GM12878 (cell line): ENCODE measurements at regions of chr5 and their contacts with region 1.

Region 1: GRCh38 chr5:77852514-77853352 is 76.6 kb upstream of the TBCA start:
- DNase-seq: peak; percentile 80
- ATAC-seq: peak; percentile 94
- H3K4me3 ChIP-seq: peak overlapping the region; percentile 76
- H3K27ac ChIP-seq: peak overlapping the region; percentile 78
- H3K4me1 ChIP-seq: peaks cover 3% of the 10 kb centered on the region; the same call in 1 of the 2 replicates
- H3K27me3 ChIP-seq: no peaks in the 10 kb centered on the region
- CTCF ChIP-seq: no peak
- EP300 ChIP-seq: 0 out of 4 replicates have a peak, but pooled peaks have one; percentile 18 to 30
- POLR2A ChIP-seq: peak; percentile 59
- RAD21 ChIP-seq: no peak; the same call in 1 of the 2 replicates

Region 2: DNA sequence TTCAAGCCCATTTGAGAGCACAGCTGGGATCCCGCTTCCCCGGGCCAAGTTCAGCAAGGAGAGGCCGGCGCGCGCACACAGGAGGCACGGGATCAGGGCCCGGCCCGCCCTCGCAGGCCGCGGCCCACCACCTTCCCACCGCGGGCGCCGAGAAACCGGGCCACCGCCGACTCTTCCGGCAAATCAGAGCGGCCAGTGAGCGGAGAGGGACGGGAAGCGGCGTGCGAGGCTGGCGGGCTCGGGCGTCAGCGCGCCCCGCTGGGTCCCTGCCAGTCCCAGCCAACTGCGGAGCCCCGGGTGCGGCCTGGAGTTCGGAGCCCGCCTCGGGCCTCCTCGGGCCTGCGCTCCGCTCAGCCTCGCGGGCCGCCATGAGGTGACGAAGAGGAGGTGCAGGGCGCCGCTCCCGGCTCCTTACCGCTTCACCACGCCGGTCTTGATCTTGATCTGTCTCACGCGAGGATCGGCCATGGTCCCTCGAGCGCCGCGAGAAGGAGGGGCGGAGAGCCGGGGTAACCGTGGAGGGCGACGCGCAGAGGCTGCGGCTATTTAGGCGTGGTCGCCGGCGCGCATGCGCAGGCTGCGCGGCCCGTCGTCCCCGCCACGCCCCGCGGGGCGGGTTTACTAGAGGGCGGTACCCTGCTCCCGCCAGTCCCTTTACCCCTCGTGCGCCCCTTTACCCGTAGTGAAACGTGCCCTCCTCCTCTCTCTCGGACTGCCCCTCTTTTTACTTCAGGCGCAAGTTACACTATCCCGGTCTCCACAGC is 76.8 kb before region 1 on chr5 and contains the start of gene TBCA:
- CTCF ChIA-PET with region 1: no interaction called
- POLR2A ChIA-PET with region 1: interaction called, 3 read pairs
- RAD21 ChIA-PET with region 1: interaction called, 4 read pairs
- SMC1A ChIA-PET with region 1: interaction called, 5 read pairs
- in situ Hi-C with region 1: no loop called
- intact Hi-C with region 1: loop called (anchors 1 kb)
- DNase-seq: peak; percentile 78
- ATAC-seq: peak; percentile 88
- H3K4me3 ChIP-seq: peak within 1 kb of the TSS; percentile 89
- H3K27ac ChIP-seq: peak within 1 kb of the TSS; percentile 95
- H3K4me1 ChIP-seq: peaks cover 4% of the 10 kb centered on the region; the same call in 1 of the 2 replicates
- H3K27me3 ChIP-seq: no peaks in the 10 kb centered on the region
- CTCF ChIP-seq: peak in 2 of 3 experiments; percentile 31 to 39; a peak in 3 of 6 replicates
- EP300 ChIP-seq: no peak; a peak in 1 of 4 replicates
- POLR2A ChIP-seq: peak; percentile 86
- RAD21 ChIP-seq: peak; percentile 27; the same call in 1 of the 2 replicates
- polyA plus RNA-seq, gene TBCA: 567 to 647 TPM

Region 3: DNA sequence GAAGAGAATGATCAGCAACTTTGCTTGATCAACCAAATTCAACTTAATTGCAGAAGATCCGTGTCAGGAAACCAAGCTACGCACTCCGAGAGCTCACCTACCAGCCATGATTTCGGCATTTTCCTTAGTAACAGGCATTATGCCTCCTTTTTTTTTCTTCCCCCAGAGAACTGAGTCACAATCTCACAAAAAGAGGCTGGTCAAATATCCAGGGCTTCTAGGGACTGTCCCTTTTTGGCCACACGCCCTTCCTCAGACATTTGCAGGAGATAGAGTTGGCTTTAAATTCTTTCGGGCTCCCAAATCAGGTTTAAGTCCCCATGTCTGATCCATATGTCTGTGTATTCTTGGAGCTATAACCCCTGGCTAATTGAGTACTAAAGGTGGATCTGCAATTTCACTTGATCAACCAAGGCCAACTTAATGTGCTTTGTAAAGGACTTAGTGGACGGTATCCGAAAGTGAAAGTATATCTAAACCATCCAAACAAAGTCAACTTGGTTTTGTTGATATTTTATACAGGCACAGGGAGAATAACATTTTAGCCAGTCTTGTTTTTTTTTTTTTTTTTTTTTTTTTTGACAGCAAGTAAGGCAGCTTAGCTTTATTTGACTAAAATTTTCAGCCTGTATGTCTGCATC is 24.2 kb after region 1 on chr5:
- CTCF ChIA-PET with region 1: interaction called, 3 read pairs
- POLR2A ChIA-PET with region 1: interaction called, 6 read pairs
- RAD21 ChIA-PET with region 1: interaction called, 25 read pairs
- SMC1A ChIA-PET with region 1: interaction called, 31 read pairs
- in situ Hi-C with region 1: no loop called
- intact Hi-C with region 1: no loop called
- DNase-seq: no peak
- ATAC-seq: no peak
- H3K4me3 ChIP-seq: no peak overlapping the region
- H3K27ac ChIP-seq: no peak overlapping the region
- H3K4me1 ChIP-seq: peaks cover 23% of the 10 kb centered on the region
- H3K27me3 ChIP-seq: no peaks in the 10 kb centered on the region
- CTCF ChIP-seq: no peak
- EP300 ChIP-seq: no peak
- POLR2A ChIP-seq: no peak
- RAD21 ChIP-seq: no peak